Right ventricle myocardium inferior (tissue), 1 donor: ENCODE measurements at regions of chr3 and their contacts with region 1.

Region 1: DNA sequence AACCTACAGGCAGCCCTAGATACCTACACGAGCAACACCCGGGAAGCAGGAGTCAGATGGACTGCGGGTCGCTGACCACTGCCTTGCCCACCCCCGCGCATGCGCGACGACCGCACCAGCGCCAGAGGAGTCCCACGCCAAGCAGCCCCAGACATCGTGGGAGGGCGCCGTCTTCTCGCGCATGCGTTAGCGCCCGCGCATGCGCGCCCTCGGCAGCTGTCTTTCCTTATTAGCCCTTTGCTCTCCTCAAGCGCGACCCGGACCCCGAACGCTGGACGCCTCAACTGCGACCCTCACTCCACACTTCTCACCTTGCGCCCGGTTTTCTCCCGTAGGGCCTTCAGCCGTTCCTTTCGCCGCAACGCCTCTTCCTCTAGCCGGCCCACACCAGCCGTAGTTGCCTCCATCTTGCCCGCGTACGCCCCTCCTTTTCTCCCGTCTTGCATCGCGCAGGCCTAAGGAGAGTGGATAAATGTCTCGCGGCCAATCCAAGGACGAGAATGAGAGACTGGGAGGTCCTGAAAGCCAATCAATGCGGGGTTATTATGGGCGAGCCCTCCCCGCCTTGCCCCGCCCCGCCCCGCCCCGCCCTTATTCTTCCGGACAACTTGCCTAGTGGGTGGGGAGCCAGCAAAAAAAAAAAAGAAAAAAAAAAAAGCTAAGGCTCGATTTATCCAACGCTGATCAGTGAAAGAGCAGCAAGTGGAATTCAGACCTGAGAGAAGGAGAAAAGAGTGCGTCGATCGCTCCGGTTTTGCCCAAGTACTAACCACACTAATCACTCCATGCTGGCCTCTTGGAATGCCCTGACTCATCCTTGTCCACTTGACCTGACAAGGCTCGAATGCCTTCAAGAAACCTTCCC is at the start of gene CCDC12:
- DNase-seq: peak; percentile 97
- ATAC-seq: peak; percentile 91
- total RNA-seq, gene CCDC12: 26.3 TPM

Region 2: DNA sequence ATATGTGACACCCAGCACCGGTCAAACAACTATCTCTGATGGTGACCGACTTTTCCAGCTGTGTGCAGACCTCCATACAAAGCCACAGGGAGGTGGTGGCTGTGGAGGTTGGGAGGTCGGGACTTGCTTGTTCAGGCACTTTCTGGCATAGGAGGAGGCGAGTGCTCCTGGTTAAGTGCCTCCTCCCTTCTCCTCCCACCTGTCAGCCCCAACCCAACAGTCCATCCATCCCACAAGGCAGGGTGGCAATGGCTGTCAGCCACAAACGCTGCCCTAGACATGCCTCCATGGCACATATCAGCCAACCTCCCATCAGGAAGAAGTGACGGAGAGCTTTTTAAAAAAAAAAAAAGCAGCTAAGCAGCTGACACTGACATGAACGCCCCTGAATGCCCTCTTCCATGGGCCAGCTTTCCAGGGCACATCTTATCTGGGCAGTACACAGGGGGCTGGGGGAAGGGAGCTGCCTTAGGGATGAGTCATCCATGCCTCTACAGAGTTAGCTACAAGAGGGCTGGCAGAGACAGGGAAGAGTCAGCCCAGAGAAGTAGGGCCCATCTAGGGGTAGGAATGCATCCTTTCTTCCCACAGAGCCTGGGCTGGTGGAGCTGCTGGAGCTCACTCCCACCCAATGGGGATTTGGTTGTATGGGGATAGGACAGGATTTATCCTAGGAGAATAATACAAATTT is 41.2 kb before region 1 on chr3:
- intact Hi-C with region 1: loop called (anchors 2 kb)
- DNase-seq: peak; percentile 81
- ATAC-seq: peak; percentile 94

Region 3: GRCh38 chr3:47009225-47010110 is 32.9 kb after region 1 on chr3:
- intact Hi-C with region 1: loop called (anchors 1 kb)
- DNase-seq: peak; percentile 92
- ATAC-seq: peak; percentile 96

Region 4: DNA sequence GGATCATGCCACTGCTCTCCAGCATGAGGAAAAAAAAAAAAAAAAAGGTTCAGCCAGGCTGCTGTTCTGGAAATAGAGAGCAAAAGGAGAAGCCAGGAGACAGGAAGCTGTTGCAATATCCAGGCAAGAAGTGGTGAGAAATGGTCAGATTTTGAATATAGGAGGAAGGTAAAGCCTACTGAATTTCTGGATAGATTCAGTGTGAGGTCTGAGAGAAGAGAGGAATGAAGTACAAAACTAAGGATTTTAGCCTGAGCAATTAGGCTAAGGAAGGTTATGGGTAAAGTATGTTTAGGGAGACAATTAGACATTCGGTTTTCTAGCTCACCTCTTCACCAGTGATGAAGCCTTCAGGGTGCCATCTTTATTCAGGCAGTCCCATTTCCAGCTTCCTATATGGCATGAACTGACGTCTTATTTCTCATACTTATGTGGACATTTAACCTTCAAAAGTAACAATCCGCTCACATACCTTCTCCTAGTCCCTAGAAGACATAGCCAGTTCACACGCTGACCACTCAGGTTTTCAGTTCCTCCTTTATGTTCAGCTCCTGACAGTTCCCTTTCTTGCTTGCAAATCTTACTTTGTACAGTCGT is 248.8 kb after region 1 on chr3:
- intact Hi-C with region 1: no loop called
- DNase-seq: no peak
- ATAC-seq: peak; percentile 8